Dendritic cell treated with granulocyte-macrophage colony-stimulating factor and Interleukin-4, amounts not matched to agents 40 ng/mL and 50 ng/mL, for 4 days (primary cell): ENCODE measurements at regions of chr7 and their contacts with region 1.

Region 1: GRCh38 chr7:77393269-77393668 is 22.9 kb downstream of the GSAP start:
- H3K4me3 Mint-ChIP-seq: no peak overlapping the region
- H3K27ac Mint-ChIP-seq: peak overlapping the region; percentile 84
- H3K4me1 Mint-ChIP-seq: peaks cover 53% of the 10 kb centered on the region
- H3K27me3 Mint-ChIP-seq: no peaks in the 10 kb centered on the region

Region 2: DNA sequence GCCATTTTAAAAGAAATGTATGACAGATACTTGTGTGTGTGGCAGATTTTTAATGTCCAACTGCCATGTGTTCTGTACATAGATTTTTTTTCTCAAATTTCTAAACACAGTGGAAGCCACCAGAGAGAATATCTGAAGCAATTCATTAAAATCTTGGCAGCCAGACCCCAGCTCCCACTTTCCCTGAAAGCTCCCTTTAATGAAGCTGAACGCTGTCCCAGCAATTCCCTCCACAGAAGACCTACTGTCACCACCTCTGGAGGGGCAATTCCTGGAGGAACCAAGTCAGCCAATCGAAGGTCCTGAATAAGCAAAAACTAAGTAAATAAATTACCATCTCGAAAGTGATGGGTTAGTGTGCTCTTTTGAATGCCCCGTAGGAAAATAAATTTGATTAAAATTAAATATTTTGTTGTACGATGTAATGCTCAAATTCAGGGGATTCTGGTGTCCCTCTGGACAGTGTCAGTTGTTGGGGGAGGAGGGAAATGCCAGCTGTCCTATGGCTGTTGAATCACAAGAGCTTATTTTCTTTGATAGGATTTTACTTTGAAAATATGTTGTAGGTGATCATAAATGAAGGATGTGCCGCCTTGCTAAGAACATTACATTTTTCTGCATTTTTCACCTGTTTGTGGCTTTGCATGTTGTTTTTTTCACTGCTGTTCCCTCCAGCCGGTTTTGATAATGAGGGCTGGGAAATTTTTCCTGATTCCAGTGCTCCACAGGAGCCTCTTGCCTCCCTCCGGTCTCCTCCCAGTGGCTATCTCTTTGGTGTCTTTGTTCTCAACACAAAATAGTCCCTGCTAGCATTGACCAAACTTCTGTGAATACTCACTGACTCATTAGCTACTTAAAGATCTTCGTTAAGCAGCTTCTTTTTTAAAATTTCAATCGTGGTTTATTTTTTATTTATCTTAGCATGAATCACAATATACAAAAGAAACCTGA is 32.1 kb after region 1 on chr7:
- intact Hi-C with region 1: loop called (anchors 5 kb)
- H3K4me3 Mint-ChIP-seq: peak overlapping the region; percentile 51
- H3K27ac Mint-ChIP-seq: peak overlapping the region; percentile 69
- H3K4me1 Mint-ChIP-seq: peaks cover 69% of the 10 kb centered on the region
- H3K27me3 Mint-ChIP-seq: no peaks in the 10 kb centered on the region

Region 3: DNA sequence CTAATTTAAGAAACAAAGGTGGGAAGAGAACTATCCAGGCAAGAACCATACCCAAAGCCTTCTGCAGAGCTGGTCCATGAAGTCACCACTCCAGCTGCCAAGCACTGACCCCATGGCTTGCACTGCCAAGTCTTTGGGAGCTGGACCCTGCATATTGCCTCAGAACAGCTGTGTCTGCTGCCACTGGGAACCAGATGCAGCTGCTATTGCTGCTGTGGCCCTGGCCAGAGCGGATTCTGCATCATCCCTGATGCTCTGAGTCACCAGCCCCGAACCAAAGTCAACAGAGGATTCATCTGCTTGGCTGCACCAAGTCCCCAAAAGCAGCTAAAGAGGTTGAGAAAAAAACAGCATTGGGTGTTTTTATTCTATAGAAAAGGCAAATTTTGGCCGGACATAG is 62.1 kb after region 1 on chr7:
- intact Hi-C with region 1: no loop called
- H3K4me3 Mint-ChIP-seq: no peak overlapping the region
- H3K27ac Mint-ChIP-seq: no peak overlapping the region
- H3K4me1 Mint-ChIP-seq: peaks cover 34% of the 10 kb centered on the region
- H3K27me3 Mint-ChIP-seq: no peaks in the 10 kb centered on the region